CD8-positive, alpha-beta memory T cell (primary cell): ENCODE measurements at regions of chr6 and their contacts with region 1.

Region 1: DNA sequence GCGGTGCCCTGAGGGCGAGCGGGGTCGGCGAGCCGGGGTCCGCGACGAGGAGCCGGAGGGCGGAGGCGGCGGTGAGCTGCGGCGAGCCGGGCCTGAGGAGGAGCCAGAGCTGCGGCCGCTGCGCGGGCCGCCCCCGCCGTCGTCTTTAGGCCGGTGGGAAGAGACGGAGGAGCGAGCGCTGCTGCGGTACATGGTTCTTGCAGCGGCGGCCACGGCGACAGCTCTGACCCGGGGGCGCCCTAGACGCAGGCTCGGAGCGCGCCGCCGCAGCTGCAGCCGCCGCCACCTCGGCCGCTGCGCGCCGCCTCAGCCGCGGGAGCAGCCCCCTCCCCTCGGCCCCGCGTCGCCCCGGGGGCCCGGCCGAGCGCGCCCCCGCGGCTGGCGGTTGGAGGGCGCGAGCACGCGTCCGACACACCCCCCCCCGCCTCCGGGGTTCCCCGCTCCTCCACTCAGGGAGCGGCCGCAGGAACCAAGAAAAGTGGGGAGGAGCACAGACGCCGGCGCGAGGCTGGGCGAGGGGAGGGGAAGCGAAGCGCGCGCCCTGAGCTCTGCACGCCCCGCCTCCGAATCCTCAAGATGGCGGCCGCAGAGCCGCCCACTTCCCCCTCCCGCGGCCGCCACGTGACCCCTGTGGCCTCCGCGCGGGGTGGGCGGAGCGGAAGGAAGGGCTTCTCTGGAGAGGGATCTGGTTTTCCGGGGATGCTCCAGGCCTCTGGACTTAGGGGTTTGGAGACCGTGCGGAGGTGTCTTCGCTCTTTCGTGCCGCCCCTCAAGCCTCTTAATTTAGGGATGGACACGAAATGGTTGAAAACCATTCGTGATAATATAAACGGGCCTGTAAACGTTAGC is at the start of gene ZNF318:
- DNase-seq: peak; percentile 91 to 96 (median 93)
- H3K4me3 ChIP-seq: peak within 1 kb of the TSS; percentile 94
- H3K4me3 Mint-ChIP-seq: peak within 1 kb of the TSS; percentile 86 to 96 (median 91)
- H3K27ac ChIP-seq: peak within 1 kb of the TSS; percentile 83
- H3K27ac Mint-ChIP-seq: peak within 1 kb of the TSS; percentile 95 to 97 (median 96)
- H3K4me1 ChIP-seq: peaks cover 35% of the 10 kb centered on the region
- H3K4me1 Mint-ChIP-seq: peaks cover 38 to 51% (median 51%) of the 10 kb centered on the region in 3 donors
- H3K27me3 ChIP-seq: no peaks in the 10 kb centered on the region
- H3K27me3 Mint-ChIP-seq: peaks cover 0 to 6% of the 10 kb centered on the region in 2 donors
- total RNA-seq, gene ZNF318: 11.8 to 12.0 TPM

Region 2: DNA sequence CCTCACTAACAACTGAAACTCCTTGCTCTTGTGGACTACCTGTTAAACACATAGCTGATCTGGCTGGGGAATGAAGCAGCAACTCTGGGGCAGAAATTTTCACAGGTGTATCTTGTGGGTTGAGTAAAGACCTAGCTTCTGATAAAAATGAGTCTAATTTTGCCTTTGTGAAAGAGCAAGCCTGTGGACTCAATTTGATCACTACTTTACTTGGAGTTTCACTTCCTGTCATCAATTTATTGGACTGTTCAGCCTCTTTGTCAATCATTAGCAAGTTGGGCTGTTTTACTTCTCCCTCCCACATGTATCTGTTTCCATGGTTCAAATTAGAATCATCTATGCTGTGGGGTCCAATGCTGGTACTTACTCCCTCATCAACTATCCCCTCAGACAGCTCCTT is 31.2 kb before region 1 on chr6:
- CTCF ChIA-PET with region 1: no interaction called
- POLR2A ChIA-PET with region 1: no interaction called
- DNase-seq: no peak
- H3K4me3 ChIP-seq: no peak overlapping the region
- H3K4me3 Mint-ChIP-seq: no peak overlapping the region
- H3K27ac ChIP-seq: no peak overlapping the region
- H3K27ac Mint-ChIP-seq: peak overlapping the region in 6 of 8 donors; percentile 20 to 91 (median 50)
- H3K4me1 ChIP-seq: no peaks in the 10 kb centered on the region
- H3K4me1 Mint-ChIP-seq: no peaks in the 10 kb centered on the region
- H3K27me3 ChIP-seq: no peaks in the 10 kb centered on the region
- H3K27me3 Mint-ChIP-seq: no peaks in the 10 kb centered on the region

Region 3: DNA sequence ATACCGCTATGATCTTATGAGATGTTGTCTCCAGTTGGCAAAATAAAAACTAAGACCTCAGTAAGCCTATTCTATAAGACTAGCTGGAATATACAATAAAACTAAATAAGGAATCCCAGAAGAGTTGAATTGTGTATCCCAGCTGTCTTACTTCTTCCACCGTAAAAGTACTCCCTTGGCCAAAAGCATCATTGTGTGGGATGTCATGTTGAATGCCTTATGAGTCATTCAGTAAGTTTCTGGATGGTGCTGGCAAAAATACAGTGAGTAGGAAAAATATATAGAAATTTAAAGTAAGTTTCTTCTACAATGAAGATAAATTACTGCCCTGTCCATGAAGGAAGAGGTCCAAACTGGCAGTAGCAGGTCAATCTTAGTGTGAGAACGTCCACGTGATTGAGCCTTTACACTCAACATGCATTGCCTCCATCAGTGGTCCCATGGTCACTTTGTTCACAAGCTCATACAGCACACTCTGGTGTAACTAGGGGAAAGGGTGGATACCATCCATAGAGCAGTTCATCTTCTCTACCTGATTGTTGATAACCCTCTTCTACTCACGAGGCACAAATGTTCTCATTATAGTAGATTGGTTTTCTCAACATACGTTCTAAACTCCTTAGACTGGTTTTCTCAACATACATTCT is 13.7 kb after region 1 on chr6:
- CTCF ChIA-PET with region 1: interaction called, 23 read pairs
- POLR2A ChIA-PET with region 1: interaction called, 63 read pairs
- DNase-seq: no peak
- H3K4me3 ChIP-seq: peak overlapping the region; percentile 9
- H3K4me3 Mint-ChIP-seq: peak overlapping the region; percentile 12 to 89 (median 52)
- H3K27ac ChIP-seq: peak overlapping the region; percentile 35
- H3K27ac Mint-ChIP-seq: peak overlapping the region; percentile 80 to 95 (median 93)
- H3K4me1 ChIP-seq: peaks cover 46% of the 10 kb centered on the region
- H3K4me1 Mint-ChIP-seq: peaks cover 48 to 73% (median 70%) of the 10 kb centered on the region in 3 donors
- H3K27me3 ChIP-seq: no peaks in the 10 kb centered on the region
- H3K27me3 Mint-ChIP-seq: peaks cover 0 to 2% of the 10 kb centered on the region in 2 donors